ENCODE measurements at regions of chr9 and their contacts with region 1.

Region 1: DNA sequence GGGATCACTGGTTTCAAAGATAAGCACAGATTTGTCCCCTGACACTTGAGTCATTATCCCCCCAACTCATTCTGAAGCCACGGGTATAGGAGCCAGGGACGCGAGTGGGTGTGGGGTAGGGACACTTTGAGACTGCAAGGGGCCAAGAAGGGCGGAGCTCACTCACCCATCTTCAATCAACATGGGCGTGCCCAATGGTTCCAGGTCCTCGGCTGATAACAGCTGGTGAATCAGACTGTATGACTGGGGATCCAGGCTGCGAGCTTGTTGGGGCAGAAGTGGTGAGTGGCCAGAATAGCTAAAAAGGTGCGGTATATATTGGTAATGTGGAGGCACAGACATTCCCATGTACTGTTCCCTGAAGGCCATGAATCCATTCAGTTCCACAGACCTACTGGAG is 30.7 kb upstream of the NR5A1 start:
- DNase-seq: no peak
- H3K4me3 ChIP-seq: no peak overlapping the region
- H3K27ac ChIP-seq: no peak overlapping the region
- H3K4me1 ChIP-seq: no peaks in the 10 kb centered on the region
- H3K27me3 ChIP-seq: peaks cover 5 to 12% of the 10 kb centered on the region in 2 experiments
- CTCF ChIP-seq: no peak
- POLR2A ChIP-seq: no peak

Region 2: DNA sequence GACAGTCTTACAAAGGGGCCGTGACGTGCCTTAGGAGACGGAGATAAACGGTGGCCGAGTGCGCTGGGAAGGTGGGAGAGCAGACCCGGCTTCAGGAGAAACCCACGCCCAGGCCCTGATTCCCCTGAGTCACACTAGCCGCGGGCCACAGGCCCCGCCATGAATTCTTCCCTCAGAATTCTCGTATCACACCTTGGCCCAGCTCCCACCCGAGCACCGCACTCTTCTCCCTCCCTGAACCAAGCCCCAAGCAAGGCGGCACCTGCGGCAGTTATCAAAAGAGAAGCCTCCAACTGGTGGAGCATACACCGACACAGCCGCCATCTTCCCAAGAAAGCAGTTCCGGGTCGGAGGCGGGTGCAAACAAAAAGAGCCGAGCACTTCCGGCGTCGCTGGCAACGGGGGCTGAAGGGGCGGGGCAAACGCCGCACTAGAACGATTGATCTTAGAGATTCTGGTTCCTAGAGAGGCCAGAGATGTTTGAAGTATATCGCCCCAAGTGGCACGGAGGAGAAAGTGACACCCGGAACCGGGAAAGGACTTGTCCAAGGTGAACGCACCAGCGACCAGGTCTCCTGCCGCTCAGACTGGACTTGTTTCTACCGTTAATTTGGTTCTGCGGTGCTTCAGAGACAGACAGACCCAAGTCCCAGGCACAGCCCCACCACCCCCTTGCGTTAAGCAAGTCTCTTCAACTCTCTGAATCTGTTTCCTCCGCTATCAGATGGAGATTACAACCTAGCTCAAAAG is 122.6 kb before region 1 on chr9 and contains the start of gene PSMB7:
- CTCF ChIA-PET with region 1: interaction called, 146 read pairs
- POLR2A ChIA-PET with region 1: no interaction called
- dilution Hi-C with region 1: no loop called
- intact Hi-C with region 1: loop called (anchors 1 kb)
- DNase-seq: peak; percentile 97
- H3K4me3 ChIP-seq: peak within 1 kb of the TSS; percentile 63 to 97 (median 74)
- H3K27ac ChIP-seq: peak within 1 kb of the TSS; percentile 88
- H3K4me1 ChIP-seq: peaks cover 36% of the 10 kb centered on the region
- H3K27me3 ChIP-seq: no peaks in the 10 kb centered on the region
- CTCF ChIP-seq: peak; percentile 86 to 87
- POLR2A ChIP-seq: peak; percentile 26
- total RNA-seq, gene PSMB7: 227 and 241 TPM in 2 replicates

Region 3: GRCh38 chr9:124513376-124513994 is 24.4 kb before region 1 on chr9:
- CTCF ChIA-PET with region 1: interaction called, 28 read pairs
- POLR2A ChIA-PET with region 1: no interaction called
- dilution Hi-C with region 1: no loop called
- intact Hi-C with region 1: no loop called
- DNase-seq: no peak
- H3K4me3 ChIP-seq: no peak overlapping the region
- H3K27ac ChIP-seq: no peak overlapping the region
- H3K4me1 ChIP-seq: no peaks in the 10 kb centered on the region
- H3K27me3 ChIP-seq: no peaks in the 10 kb centered on the region
- CTCF ChIP-seq: no peak
- POLR2A ChIP-seq: no peak

Region 4: DNA sequence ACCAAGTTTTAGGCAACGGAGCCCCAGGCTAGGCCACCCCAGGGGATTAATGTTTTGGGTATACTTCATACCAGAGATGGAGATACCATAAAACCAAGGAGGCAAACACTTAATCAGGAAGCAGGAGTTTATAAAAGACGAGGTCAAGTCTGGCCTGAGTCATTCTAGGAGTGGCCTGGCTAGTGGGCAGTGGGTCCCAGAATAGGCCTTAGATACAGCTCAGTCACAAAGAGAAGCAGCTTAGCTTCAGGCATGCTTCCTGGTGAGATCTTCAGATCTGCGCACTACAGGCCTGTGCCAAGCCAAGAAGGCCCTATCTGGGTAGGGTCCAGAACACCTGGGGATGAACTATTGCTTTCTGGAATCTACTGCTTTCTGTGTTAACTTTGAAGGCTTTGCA is 10.1 kb before region 1 on chr9:
- CTCF ChIA-PET with region 1: interaction called, 40 read pairs
- POLR2A ChIA-PET with region 1: no interaction called
- dilution Hi-C with region 1: no loop called
- intact Hi-C with region 1: no loop called
- DNase-seq: no peak
- H3K4me3 ChIP-seq: no peak overlapping the region
- H3K27ac ChIP-seq: no peak overlapping the region
- H3K4me1 ChIP-seq: no peaks in the 10 kb centered on the region
- H3K27me3 ChIP-seq: peaks cover 1 to 5% of the 10 kb centered on the region in 2 experiments
- CTCF ChIP-seq: no peak
- POLR2A ChIP-seq: no peak

Measured in endothelial cell of umbilical vein (primary cell).